GM18951 (cell line): ENCODE measurements at regions of chr14 and their contacts with region 1.

Region 1: DNA sequence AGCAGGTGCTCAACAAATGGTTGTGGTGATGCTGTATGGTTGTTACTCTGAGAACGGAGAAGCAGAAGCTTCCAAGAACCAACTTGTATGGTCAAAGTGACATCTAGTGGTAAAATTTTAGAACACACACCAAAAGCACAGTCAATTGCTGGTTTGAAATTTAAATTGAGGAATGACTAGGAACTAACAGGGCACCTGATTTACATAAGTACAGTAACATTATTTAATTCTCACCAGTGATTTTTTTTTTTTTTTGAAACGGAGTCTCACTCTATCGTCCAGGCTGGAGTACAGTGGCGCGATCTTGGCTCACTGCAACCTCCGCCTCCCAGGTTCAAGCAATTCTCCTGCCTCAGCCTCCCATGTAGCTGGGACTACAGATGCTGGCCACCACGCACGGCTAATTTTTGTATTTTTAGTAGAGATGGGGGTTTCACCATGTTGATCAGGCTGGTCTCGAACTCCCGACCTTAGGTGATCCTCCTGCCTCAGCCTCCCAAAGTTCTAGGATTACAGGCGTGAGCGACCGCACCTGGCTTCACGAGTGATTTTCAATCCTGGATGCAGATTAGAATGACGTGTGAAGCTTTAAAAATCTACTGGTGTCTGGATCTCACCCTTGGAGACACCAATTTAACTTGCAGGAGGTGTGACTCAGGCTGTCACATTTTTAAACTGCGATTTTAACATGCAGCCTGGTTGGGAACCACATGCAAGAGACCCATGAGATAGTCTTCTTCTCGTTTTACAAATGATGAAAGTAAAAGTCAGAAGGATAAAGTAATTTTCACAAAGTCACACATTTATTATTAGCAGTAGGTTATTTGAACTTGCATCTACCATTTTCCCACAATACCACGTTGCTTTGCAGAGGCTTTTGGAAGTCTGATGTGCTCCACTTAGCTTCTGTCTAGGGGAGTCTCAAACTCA is 14.1 kb upstream of the NUMB start:
- POLR2A ChIP-seq: no peak

Region 2: GRCh38 chr14:73290279-73290678 is 182.2 kb before region 1 on chr14:
- in situ Hi-C with region 1: loop called (anchors 5 kb)
- POLR2A ChIP-seq: no peak